ENCODE measurements at regions of chr6 and their contacts with region 1.

Region 1: DNA sequence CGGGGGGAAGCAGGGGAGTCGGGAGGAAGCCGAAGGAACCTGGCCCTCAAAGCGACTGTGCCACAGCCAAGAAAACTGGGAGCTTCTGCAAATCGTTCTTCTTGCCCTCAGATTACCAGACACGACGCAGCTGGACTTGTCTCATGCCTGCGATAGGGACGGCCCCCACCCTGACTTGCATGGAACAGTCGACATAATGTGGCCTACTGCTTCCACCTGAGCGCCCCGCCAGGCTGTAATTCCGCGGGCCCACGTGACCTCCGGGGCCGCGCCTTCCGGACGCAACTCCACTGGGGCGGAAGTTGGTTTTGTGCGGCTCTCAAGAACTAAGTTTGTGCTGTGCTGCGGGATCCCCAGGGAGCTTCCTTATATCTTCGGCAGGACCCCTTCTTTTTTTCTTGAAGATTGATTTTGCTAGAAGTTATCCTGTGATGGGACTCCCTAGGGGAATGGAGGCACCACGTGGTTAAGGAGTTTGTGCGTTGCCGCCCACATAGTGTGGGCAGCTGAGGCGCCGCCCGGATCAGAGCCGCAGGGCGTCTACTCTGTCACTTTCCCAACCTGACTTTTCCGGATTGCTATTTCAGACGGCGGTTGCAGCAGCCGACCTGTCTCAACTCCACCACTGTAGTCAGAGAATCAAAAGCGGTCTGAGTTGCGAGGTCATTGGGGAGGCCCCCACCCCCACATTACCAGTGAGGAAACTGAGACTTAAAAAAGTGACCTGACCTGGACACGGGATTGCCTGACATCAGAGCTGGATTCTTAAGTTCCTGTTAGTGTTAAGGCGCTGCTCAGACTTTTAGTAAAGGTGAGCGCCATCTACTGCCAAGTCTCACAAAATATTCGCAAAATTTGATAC is 540 bp upstream of the CD164 start:
- DNase-seq: peak; percentile 90 to 91
- ATAC-seq: peak; percentile 82 to 84
- H3K4me3 ChIP-seq: peak overlapping the region; percentile 87 to 100 (median 98)
- H3K27ac ChIP-seq: peak overlapping the region; percentile 96 to 100 (median 99)
- H3K4me1 ChIP-seq: peaks cover 42 to 43% of the 10 kb centered on the region in 2 donors
- H3K27me3 ChIP-seq: no peaks in the 10 kb centered on the region
- CTCF ChIP-seq: peak; percentile 51 to 64 (median 55)
- POLR2A ChIP-seq: peak; percentile 50 to 75

Region 2: GRCh38 chr6:108558372-108559096 is 824.3 kb before region 1 on chr6:
- in situ Hi-C with region 1: no loop called
- intact Hi-C with region 1: loop called (anchors 5 kb)
- DNase-seq: peak; percentile 98 to 99
- ATAC-seq: peak; percentile 36 to 40
- H3K4me3 ChIP-seq: peak overlapping the region; percentile 81 to 99 (median 94)
- H3K27ac ChIP-seq: peak overlapping the region; percentile 95 to 100 (median 100)
- H3K4me1 ChIP-seq: peaks cover 29 to 30% of the 10 kb centered on the region in 2 donors
- H3K27me3 ChIP-seq: no peaks in the 10 kb centered on the region
- CTCF ChIP-seq: no peak
- POLR2A ChIP-seq: peak; percentile 66 to 94

Region 3: GRCh38 chr6:109082188-109082577 is 300.6 kb before region 1 on chr6:
- in situ Hi-C with region 1: no loop called
- intact Hi-C with region 1: loop called (anchors 2 kb)
- DNase-seq: peak; percentile 24 to 63
- ATAC-seq: peak; percentile 66 to 67
- H3K4me3 ChIP-seq: peak overlapping the region; percentile 1 to 39 (median 22)
- H3K27ac ChIP-seq: peak overlapping the region; percentile 93 to 98 (median 96)
- H3K4me1 ChIP-seq: peaks cover 82 to 83% of the 10 kb centered on the region in 2 donors
- H3K27me3 ChIP-seq: no peaks in the 10 kb centered on the region
- CTCF ChIP-seq: peak in 3 of 5 experiments; percentile 50 to 60 (median 53)
- POLR2A ChIP-seq: peak; percentile 42 to 68

Region 4: DNA sequence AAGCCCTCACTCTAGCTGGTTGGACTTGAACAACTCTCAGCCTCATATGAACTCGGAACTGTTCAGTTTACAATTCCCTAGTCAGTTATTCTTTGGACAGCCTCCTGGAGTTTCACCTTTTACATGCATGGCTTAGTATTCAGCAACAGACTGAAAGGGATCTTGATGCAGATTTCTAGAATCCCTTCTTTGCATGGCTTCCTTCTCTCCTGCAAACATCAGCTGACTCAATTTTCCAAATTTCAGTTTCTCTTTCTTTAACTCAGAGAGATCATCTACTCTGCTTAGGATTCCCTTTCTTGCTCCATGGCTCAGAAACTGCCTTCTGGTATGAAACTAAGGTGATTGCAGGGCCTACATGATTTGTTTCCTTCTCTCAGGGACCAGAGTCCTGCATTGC is 187.9 kb before region 1 on chr6:
- in situ Hi-C with region 1: loop called in 1 of 4 experiments (anchors 10 kb)
- intact Hi-C with region 1: no loop called
- DNase-seq: no peak
- ATAC-seq: peak in 1 of 2 donors; percentile 39
- H3K4me3 ChIP-seq: no peak overlapping the region
- H3K27ac ChIP-seq: peak overlapping the region in 1 of 4 donors; percentile 18
- H3K4me1 ChIP-seq: peaks cover 7 to 11% of the 10 kb centered on the region in 2 donors
- H3K27me3 ChIP-seq: no peaks in the 10 kb centered on the region
- CTCF ChIP-seq: no peak
- POLR2A ChIP-seq: no peak

Region 5: GRCh38 chr6:109255946-109256640 is 126.7 kb before region 1 on chr6:
- in situ Hi-C with region 1: no loop called
- intact Hi-C with region 1: no loop called
- DNase-seq: no peak
- ATAC-seq: no peak
- H3K4me3 ChIP-seq: no peak overlapping the region
- H3K27ac ChIP-seq: no peak overlapping the region
- H3K4me1 ChIP-seq: no peaks in the 10 kb centered on the region
- H3K27me3 ChIP-seq: no peaks in the 10 kb centered on the region
- CTCF ChIP-seq: no peak
- POLR2A ChIP-seq: no peak

Region 6: DNA sequence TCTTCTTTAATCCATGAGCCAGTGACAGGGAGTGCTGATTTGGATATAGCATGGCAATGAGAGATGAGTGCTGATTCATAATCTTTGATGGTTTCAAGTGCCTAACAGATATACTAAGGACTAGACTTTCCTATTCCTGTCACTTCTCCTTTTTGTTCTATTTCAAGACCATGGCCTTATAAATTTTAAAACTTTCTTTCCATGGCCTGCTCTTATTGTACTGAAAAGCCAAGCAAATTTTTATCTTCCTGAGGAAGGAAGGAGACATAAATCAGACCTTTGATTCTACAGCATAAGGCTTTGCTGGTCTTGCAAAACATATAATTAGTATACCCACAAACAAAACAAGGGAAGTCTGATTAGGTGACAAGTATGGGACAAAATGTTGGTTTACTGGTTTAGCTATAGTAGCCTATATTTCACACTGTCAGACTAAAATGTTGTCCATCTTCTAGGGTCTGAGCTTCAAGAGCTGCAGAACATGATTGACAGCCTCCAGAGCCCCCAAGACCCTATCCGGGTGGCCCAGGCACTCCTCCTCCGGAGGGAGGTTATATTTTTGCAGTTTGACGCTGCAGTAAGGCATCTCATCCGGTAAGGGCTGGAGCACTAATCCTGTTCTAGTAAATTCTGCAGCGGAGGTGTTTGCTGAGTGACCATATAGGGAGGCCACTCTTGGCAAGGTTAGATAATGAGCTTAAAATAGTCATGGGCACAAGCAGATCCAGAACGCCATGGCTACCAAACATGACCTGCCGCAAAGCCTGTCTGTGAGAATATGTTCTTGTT is 82.8 kb before region 1 on chr6:
- in situ Hi-C with region 1: loop called in 1 of 4 experiments (anchors 10 kb)
- intact Hi-C with region 1: loop called (anchors 1 kb)
- DNase-seq: peak; percentile 63 to 69
- ATAC-seq: peak; percentile 90 to 99
- H3K4me3 ChIP-seq: peak overlapping the region in 1 of 4 donors; percentile 19
- H3K27ac ChIP-seq: peak overlapping the region; percentile 79 to 88 (median 83)
- H3K4me1 ChIP-seq: peaks cover 41 to 50% of the 10 kb centered on the region in 2 donors
- H3K27me3 ChIP-seq: no peaks in the 10 kb centered on the region
- CTCF ChIP-seq: no peak
- POLR2A ChIP-seq: peak in 1 of 2 donors; percentile 69

Region 7: GRCh38 chr6:109455502-109456282 is 72.9 kb after region 1 on chr6 and contains the start of gene MICAL1:
- in situ Hi-C with region 1: no loop called
- intact Hi-C with region 1: loop called (anchors 5 kb)
- DNase-seq: peak; percentile 39 to 60
- ATAC-seq: peak; percentile 56 to 62
- H3K4me3 ChIP-seq: peak within 1 kb of the TSS; percentile 67 to 94 (median 80)
- H3K27ac ChIP-seq: peak within 1 kb of the TSS; percentile 61 to 74 (median 72)
- H3K4me1 ChIP-seq: peaks cover 18 to 34% of the 10 kb centered on the region in 2 donors
- H3K27me3 ChIP-seq: no peaks in the 10 kb centered on the region
- CTCF ChIP-seq: peak in 3 of 5 experiments; percentile 14 to 58 (median 55)
- POLR2A ChIP-seq: peak; percentile 14 to 25
- total RNA-seq, gene MICAL1: 6.0 to 11.6 (median 8.0) TPM

Region 8: GRCh38 chr6:110083875-110084585 is 701.2 kb after region 1 on chr6:
- in situ Hi-C with region 1: no loop called
- intact Hi-C with region 1: no loop called
- DNase-seq: no peak
- ATAC-seq: no peak
- H3K4me3 ChIP-seq: no peak overlapping the region
- H3K27ac ChIP-seq: no peak overlapping the region
- H3K4me1 ChIP-seq: no peaks in the 10 kb centered on the region
- H3K27me3 ChIP-seq: no peaks in the 10 kb centered on the region
- CTCF ChIP-seq: no peak
- POLR2A ChIP-seq: no peak

Region 9: GRCh38 chr6:110815217-110816109 is 1432.7 kb after region 1 on chr6 and contains the start of gene CDK19:
- in situ Hi-C with region 1: no loop called
- intact Hi-C with region 1: loop called (anchors 5 kb)
- DNase-seq: peak; percentile 97
- ATAC-seq: peak; percentile 92
- H3K4me3 ChIP-seq: peak within 1 kb of the TSS; percentile 65 to 94 (median 82)
- H3K27ac ChIP-seq: peak within 1 kb of the TSS; percentile 89 to 95 (median 91)
- H3K4me1 ChIP-seq: peaks cover 6 to 13% of the 10 kb centered on the region in 2 donors
- H3K27me3 ChIP-seq: no peaks in the 10 kb centered on the region
- CTCF ChIP-seq: no peak
- POLR2A ChIP-seq: peak; percentile 72 to 75
- total RNA-seq, gene CDK19: 3.0 to 7.4 (median 6.3) TPM